CD8-positive, alpha-beta memory T cell (primary cell): ENCODE measurements at regions of chr3 and their contacts with region 1.

Region 1: DNA sequence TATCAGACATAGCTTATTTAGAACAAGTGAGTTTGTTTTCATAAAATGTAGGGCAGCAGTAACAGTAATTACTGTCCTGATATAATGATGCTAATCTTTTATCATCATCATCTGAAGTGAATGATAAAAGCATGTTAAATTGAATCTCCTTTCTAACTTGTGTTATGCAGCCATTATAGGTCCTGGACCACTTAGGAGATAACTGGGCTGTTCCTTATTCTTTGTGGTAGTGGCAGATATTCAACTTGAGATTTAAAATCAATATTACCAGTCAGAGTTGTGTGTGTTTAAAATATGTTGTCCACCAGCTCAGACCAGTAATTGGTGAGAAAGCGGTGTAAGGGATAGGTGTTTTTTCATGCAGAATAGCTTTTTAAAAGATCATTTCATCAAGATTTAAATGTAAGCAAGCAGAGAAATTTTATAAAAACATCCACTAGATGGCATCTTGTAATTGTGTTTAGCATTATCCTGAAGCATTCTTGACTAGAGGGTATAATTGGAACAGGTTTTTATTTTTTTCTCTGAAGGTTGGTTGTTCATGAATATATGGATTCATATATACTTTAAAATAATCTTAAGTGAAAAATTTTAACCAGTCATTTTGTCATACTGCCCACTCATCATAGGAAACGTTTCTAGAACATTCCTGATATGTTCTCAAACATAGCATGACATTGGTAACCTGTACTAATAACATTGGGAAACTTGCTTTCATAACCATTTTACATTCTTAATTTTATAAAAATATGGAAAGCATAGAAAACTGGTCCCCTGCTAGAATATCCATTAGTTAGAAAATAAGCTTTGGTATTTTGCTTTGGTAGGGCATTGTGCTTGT is 153.9 kb downstream of the BBX start:
- DNase-seq: peak in 2 of 5 donors; percentile 15 to 35
- H3K4me3 ChIP-seq: no peak overlapping the region
- H3K4me3 Mint-ChIP-seq: no peak overlapping the region
- H3K27ac ChIP-seq: no peak overlapping the region
- H3K27ac Mint-ChIP-seq: peak overlapping the region in 1 of 8 donors; percentile 82
- H3K4me1 ChIP-seq: no peaks in the 10 kb centered on the region
- H3K4me1 Mint-ChIP-seq: peaks cover 23 to 51% (median 39%) of the 10 kb centered on the region in 3 donors
- H3K27me3 ChIP-seq: no peaks in the 10 kb centered on the region
- H3K27me3 Mint-ChIP-seq: no peaks in the 10 kb centered on the region

Region 2: GRCh38 chr3:107543666-107544065 is 133.0 kb before region 1 on chr3:
- CTCF ChIA-PET with region 1: no interaction called
- POLR2A ChIA-PET with region 1: no interaction called
- DNase-seq: no peak
- H3K4me3 ChIP-seq: no peak overlapping the region
- H3K4me3 Mint-ChIP-seq: no peak overlapping the region
- H3K27ac ChIP-seq: no peak overlapping the region
- H3K27ac Mint-ChIP-seq: no peak overlapping the region
- H3K4me1 ChIP-seq: no peaks in the 10 kb centered on the region
- H3K4me1 Mint-ChIP-seq: peaks cover 35 to 65% (median 57%) of the 10 kb centered on the region in 3 donors
- H3K27me3 ChIP-seq: no peaks in the 10 kb centered on the region
- H3K27me3 Mint-ChIP-seq: no peaks in the 10 kb centered on the region

Region 3: DNA sequence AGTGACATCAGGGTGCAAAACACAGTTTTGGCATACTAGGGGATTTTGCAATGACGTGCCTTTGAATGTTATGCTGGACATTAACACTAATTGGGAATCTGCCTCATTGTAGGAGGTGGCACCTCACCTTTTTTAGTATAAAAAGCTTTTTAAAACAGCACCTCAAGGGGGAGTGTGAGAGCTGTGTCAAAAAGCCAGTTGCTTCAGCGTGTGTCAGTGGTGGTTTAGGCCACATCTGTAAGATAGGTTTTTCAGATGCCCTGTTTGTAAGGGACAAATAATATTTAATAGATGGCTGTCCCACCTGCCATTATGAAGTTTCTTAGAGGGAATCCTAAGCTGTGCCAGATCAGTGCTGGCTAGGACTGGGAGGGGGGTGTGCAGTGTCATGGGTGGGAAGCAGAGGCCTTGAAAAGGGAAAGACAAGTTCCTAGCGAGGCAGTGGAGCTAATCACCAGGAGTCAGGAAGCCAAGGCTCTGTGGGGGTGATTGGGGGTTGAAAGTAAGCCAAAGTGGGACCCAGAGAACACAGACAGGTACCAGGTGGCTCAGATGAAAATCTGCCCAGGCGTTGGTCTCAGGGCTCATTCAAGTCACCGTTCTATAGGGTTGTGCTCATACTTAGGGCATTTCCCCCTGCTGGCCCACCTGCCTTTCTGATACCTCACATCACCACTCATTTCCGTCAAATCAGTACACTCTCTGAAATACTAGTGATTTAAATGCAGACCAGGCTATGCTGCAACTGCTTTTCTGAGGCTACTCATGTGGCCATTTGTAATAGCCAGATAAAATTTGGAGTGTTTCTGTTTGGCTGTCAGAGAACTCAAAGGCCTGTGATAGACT is 33.4 kb before region 1 on chr3:
- CTCF ChIA-PET with region 1: no interaction called
- POLR2A ChIA-PET with region 1: no interaction called
- DNase-seq: no peak
- H3K4me3 ChIP-seq: no peak overlapping the region
- H3K4me3 Mint-ChIP-seq: no peak overlapping the region
- H3K27ac ChIP-seq: no peak overlapping the region
- H3K27ac Mint-ChIP-seq: peak overlapping the region in 1 of 8 donors; percentile 34
- H3K4me1 ChIP-seq: no peaks in the 10 kb centered on the region
- H3K4me1 Mint-ChIP-seq: peaks cover 22 to 40% (median 23%) of the 10 kb centered on the region in 3 donors
- H3K27me3 ChIP-seq: no peaks in the 10 kb centered on the region
- H3K27me3 Mint-ChIP-seq: no peaks in the 10 kb centered on the region

Region 4: DNA sequence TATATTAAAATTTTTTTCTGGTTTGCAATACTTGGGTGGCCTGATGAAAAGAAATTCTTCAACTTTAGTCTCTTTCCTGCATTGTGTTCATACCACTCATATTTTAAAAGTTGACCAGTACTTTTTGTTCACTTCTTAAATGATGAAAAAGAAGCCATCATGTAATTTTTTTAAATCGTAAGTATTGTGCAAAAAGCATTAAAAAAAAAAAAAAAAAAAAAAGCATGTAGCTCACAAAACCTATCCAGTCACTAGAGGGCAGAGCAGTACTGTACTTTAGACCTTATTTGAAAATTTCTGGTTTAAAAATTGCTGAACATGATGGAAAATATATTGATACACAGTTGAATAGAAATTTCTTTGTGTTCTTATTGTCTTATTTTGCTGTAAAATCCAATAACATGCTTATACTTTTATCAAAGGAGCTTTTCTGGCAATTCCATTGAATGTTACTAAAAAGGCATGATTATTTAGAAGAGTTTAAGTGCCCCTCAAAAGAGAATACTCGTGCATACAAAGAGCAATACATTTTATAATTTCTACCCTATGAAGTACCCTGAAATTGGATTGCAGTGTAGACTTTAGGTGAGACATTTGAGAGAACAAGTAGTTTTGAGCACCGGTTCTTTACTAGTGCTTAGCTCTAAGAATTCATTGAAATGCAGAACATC is 16.2 kb before region 1 on chr3:
- CTCF ChIA-PET with region 1: interaction called, 22 read pairs
- POLR2A ChIA-PET with region 1: no interaction called
- DNase-seq: peak in 2 of 5 donors; percentile 8 to 25
- H3K4me3 ChIP-seq: no peak overlapping the region
- H3K4me3 Mint-ChIP-seq: no peak overlapping the region
- H3K27ac ChIP-seq: no peak overlapping the region
- H3K27ac Mint-ChIP-seq: no peak overlapping the region
- H3K4me1 ChIP-seq: peaks cover 7% of the 10 kb centered on the region
- H3K4me1 Mint-ChIP-seq: peaks cover 20 to 47% (median 29%) of the 10 kb centered on the region in 3 donors
- H3K27me3 ChIP-seq: no peaks in the 10 kb centered on the region
- H3K27me3 Mint-ChIP-seq: no peaks in the 10 kb centered on the region

Region 5: GRCh38 chr3:107739227-107739626 is 62.5 kb after region 1 on chr3:
- CTCF ChIA-PET with region 1: interaction called, 10 read pairs
- POLR2A ChIA-PET with region 1: no interaction called
- DNase-seq: no peak
- H3K4me3 ChIP-seq: no peak overlapping the region
- H3K4me3 Mint-ChIP-seq: no peak overlapping the region
- H3K27ac ChIP-seq: no peak overlapping the region
- H3K27ac Mint-ChIP-seq: peak overlapping the region in 1 of 8 donors; percentile 86
- H3K4me1 ChIP-seq: no peaks in the 10 kb centered on the region
- H3K4me1 Mint-ChIP-seq: peaks cover 0 to 6% (median 0%) of the 10 kb centered on the region in 3 donors
- H3K27me3 ChIP-seq: no peaks in the 10 kb centered on the region
- H3K27me3 Mint-ChIP-seq: peaks cover 0 to 1% of the 10 kb centered on the region in 2 donors